Activated T-helper 1 cell treated with anti-CD3 and anti-CD28 coated beads, Interleukin-12 subunit alpha, Interleukin-12 subunit beta, Interleukin-2, Interleukin-4 antibody, amounts not matched to agents 30 ng/mL and 10 ng/mL and 1 ng/mL, durations not matched to agents 14 hours and 24 hours and 36 hours (primary cell): ENCODE measurements at regions of chr21 and their contacts with region 1.

Region 1: DNA sequence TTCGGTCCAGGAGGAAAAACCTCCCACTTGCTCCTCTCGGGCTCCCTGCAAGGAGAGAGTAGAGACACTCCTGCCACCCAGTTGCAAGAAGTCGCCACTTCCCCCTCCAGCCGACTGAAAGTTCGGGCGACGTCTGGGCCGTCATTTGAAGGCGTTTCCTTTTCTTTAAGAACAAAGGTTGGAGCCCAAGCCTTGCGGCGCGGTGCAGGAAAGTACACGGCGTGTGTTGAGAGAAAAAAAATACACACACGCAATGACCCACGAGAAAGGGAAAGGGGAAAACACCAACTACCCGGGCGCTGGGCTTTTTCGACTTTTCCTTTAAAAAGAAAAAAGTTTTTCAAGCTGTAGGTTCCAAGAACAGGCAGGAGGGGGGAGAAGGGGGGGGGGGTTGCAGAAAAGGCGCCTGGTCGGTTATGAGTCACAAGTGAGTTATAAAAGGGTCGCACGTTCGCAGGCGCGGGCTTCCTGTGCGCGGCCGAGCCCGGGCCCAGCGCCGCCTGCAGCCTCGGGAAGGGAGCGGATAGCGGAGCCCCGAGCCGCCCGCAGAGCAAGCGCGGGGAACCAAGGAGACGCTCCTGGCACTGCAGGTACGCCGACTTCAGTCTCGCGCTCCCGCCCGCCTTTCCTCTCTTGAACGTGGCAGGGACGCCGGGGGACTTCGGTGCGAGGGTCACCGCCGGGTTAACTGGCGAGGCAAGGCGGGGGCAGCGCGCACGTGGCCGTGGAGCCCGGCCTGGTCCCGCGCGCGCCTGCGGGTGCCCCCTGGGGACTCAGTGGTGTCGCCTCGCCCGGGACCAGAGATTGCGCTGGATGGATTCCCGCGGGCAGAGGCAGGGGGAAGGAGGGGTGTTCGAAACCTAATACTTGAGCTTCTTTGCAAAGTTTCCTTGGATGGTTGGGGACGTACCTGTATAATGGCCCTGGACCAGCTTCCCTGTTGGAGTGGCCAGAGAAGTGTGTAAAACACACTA is 45.3 kb downstream of the MRPL39 start:
- DNase-seq: peak; percentile 68
- H3K4me3 Mint-ChIP-seq: peak overlapping the region; percentile 98
- H3K27ac Mint-ChIP-seq: peak overlapping the region; percentile 98
- H3K4me1 Mint-ChIP-seq: peaks cover 69% of the 10 kb centered on the region
- H3K27me3 Mint-ChIP-seq: no peaks in the 10 kb centered on the region

Region 2: DNA sequence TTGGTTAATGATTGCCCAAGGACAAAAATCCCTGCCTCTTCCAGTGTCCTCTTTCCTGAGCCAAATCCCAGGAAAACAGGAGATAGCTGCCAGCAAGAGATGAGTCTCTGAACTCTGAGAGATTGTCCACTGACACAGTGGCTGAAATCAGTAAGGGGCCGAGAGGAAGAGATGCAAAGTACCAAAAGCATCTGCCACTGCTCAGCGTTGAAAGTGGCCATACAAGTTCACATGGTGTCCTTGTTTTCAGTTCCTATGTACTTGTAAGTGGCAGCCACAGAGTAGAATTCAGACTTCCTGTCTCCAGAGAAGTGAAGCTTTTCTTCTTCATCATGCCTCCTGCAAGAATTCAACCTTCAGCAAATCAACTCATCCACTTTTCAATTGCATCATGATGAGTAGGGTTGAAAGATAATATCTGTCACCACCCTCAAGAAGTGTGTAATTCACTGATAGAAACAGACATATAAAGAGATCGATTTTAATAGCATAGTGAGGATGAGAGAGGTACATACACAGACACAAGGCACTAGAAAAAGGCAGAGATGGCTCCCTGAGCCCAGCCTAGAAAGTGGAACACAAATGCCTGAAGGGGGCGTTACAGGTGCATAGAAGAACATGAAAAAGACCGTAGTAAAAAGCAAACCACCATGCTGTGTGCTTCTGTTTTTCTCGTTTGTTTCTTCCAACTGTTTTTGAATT is 140.5 kb before region 1 on chr21:
- intact Hi-C with region 1: loop called (anchors 1 kb)
- DNase-seq: peak; percentile 60
- H3K4me3 Mint-ChIP-seq: peak overlapping the region; percentile 77
- H3K27ac Mint-ChIP-seq: peak overlapping the region; percentile 77
- H3K4me1 Mint-ChIP-seq: peaks cover 46% of the 10 kb centered on the region
- H3K27me3 Mint-ChIP-seq: peaks cover 2% of the 10 kb centered on the region

Region 3: DNA sequence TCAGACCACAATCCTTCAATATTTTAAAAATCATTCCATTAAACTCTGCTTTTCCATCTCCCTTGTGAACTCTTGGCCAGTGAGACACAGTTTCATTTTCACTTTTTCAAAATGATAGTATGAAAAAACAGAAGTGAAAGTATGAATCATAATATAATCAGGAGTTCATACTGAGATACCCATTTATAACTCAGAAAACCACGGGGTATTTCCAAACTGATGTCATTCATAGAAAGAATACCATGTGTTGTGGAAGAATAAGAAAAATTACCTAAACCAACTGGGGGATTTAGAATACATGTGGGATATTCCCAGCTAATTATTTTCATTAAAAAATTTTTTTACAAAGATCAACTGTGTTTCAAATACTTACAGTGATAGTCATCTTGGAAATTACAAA is 104.5 kb before region 1 on chr21:
- intact Hi-C with region 1: loop called (anchors 1 kb)
- DNase-seq: no peak
- H3K4me3 Mint-ChIP-seq: peak overlapping the region; percentile 61
- H3K27ac Mint-ChIP-seq: peak overlapping the region; percentile 88
- H3K4me1 Mint-ChIP-seq: peaks cover 71% of the 10 kb centered on the region
- H3K27me3 Mint-ChIP-seq: no peaks in the 10 kb centered on the region

Region 4: GRCh38 chr21:25464275-25464674 is 97.7 kb before region 1 on chr21:
- intact Hi-C with region 1: loop called (anchors 1 kb)
- DNase-seq: no peak
- H3K4me3 Mint-ChIP-seq: peak overlapping the region; percentile 58
- H3K27ac Mint-ChIP-seq: peak overlapping the region; percentile 90
- H3K4me1 Mint-ChIP-seq: peaks cover 62% of the 10 kb centered on the region
- H3K27me3 Mint-ChIP-seq: no peaks in the 10 kb centered on the region

Region 5: DNA sequence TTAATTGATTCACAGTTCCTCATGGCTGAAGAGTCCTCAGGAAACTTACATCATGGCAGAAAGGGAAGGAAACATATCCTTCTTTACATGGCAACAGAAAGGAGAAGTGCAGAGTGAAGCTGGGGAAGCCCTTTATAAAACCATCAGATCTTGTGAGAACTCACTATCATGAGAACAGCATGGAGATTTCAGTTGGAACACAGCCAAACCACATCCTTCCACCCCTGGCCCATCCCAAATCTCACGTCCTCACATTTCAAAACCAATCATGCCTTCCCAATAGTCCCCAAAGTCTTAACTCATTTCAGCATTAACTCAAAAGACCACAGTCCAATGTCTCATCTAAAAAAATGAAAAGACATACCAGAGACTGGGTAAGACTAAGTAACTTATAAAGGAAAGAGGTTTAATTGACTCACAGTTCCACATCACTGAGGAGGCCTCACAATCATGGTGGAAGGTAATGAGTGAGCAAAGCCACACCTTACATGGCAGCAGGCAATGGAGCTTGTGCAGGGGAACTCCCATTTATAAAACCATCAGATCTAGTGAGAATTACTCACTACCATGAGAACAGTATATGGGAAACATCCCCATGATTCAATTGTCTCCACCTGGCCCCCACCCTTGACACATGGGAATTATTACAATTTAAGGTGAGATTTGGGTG is 59.8 kb before region 1 on chr21:
- intact Hi-C with region 1: loop called (anchors 1 kb)
- DNase-seq: no peak
- H3K4me3 Mint-ChIP-seq: no peak overlapping the region
- H3K27ac Mint-ChIP-seq: peak overlapping the region; percentile 84
- H3K4me1 Mint-ChIP-seq: peaks cover 21% of the 10 kb centered on the region
- H3K27me3 Mint-ChIP-seq: no peaks in the 10 kb centered on the region

Region 6: GRCh38 chr21:25509862-25510261 is 52.1 kb before region 1 on chr21:
- intact Hi-C with region 1: loop called (anchors 1 kb)
- DNase-seq: no peak
- H3K4me3 Mint-ChIP-seq: no peak overlapping the region
- H3K27ac Mint-ChIP-seq: peak overlapping the region; percentile 13
- H3K4me1 Mint-ChIP-seq: peaks cover 42% of the 10 kb centered on the region
- H3K27me3 Mint-ChIP-seq: no peaks in the 10 kb centered on the region

Region 7: DNA sequence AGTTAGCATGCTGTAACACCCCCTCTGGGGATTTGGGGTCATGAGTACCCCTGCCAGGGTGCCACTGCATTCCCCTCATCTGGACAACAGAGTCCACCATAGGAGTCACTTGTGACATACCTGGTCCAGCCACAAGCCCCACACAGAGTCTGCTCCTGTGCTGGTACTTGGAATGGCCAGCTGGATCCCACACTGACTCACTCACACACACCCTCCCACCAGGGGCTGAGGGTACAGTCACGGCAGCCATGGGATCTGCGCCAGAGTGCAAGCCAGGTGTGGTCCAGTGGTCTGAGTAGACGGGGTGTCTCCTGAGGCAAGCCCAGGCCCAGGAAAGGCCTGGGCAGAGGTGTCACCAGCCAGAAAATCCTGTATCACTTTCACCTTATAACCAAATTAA is 22.3 kb before region 1 on chr21:
- intact Hi-C with region 1: loop called (anchors 2 kb)
- DNase-seq: no peak
- H3K4me3 Mint-ChIP-seq: no peak overlapping the region
- H3K27ac Mint-ChIP-seq: no peak overlapping the region
- H3K4me1 Mint-ChIP-seq: peaks cover 7% of the 10 kb centered on the region
- H3K27me3 Mint-ChIP-seq: peaks cover 1% of the 10 kb centered on the region

Region 8: GRCh38 chr21:25722631-25723030 is 160.7 kb after region 1 on chr21:
- intact Hi-C with region 1: no loop called
- DNase-seq: no peak
- H3K4me3 Mint-ChIP-seq: no peak overlapping the region
- H3K27ac Mint-ChIP-seq: no peak overlapping the region
- H3K4me1 Mint-ChIP-seq: peaks cover 5% of the 10 kb centered on the region
- H3K27me3 Mint-ChIP-seq: no peaks in the 10 kb centered on the region